ENCODE measurements at regions of chr6 and their contacts with region 1.

Region 1: DNA sequence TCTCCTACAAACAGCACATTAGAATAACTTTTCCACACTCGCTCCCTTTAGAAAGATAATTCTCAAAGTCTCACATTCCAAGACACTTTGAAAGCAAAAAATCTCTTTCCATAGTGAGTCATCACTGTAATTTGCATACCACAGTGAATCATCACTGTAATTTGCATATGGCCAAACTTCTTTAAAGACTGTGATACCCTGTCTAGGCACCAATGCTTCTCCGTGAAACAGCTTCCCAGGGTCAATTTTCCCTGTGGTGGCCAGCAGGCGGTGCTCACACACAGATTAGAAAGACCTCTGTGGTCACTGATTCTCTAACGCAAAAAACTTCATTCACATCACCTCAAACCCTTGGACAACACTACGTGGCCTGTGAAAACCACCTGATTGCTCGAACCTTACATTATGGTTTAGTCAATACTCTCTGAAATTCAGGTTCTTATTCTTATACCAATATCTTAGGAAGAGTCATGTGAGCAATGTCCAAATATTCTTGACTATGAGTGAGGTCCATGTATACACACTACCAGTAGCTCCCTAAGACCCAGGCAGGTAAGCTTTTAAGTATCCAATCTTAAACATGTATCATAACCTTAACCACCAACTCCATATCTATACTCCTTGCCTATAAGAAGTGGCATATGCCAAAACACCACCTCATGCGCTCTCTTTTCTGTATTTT is 78.5 kb upstream of the PHACTR1 start:
- DNase-seq: peak; percentile 71
- H3K4me3 Mint-ChIP-seq: no peak overlapping the region
- H3K27ac Mint-ChIP-seq: no peak overlapping the region
- H3K4me1 Mint-ChIP-seq: peaks cover 4% of the 10 kb centered on the region
- H3K27me3 Mint-ChIP-seq: peaks cover 34% of the 10 kb centered on the region

Region 2: GRCh38 chr6:12844290-12845223 is 206.5 kb after region 1 on chr6:
- CTCF ChIA-PET with region 1: no interaction called
- intact Hi-C with region 1: loop called (anchors 2 kb)
- DNase-seq: no peak
- H3K4me3 Mint-ChIP-seq: no peak overlapping the region
- H3K27ac Mint-ChIP-seq: no peak overlapping the region
- H3K4me1 Mint-ChIP-seq: no peaks in the 10 kb centered on the region
- H3K27me3 Mint-ChIP-seq: peaks cover 7% of the 10 kb centered on the region

Region 3: DNA sequence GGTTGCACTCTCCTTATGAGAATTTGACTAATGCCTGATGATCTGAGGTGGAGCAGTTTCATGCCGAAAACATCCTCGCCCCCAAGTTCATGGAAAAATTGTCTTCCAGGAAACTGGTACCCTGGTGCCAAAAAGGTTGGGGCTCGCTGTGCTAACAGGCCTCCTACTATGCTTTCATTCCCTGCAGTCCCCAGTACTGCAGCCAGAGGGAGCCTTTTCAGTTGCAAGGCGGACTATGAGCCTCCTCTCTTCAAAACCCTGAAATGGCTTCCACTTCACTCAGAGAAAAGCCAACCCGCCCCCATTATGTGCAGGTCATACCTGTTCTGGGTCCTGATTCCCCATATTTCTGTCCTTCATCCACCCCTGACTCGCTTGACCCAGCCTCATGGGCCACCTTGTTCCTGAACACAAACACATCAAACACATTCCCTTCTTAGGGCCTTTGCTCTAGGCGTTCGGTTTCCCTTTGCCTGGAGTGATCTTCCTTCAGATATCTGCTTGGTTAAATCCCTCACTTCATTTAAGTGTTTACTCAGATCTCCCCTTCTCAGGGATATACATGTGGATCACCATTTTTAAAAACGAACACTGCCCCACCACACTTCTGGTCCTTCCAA is 252.2 kb after region 1 on chr6:
- CTCF ChIA-PET with region 1: interaction called, 7 read pairs
- intact Hi-C with region 1: loop called (anchors 1 kb)
- DNase-seq: peak; percentile 31
- H3K4me3 Mint-ChIP-seq: no peak overlapping the region
- H3K27ac Mint-ChIP-seq: no peak overlapping the region
- H3K4me1 Mint-ChIP-seq: no peaks in the 10 kb centered on the region
- H3K27me3 Mint-ChIP-seq: peaks cover 15% of the 10 kb centered on the region

Measured in activated naive CD4-positive, alpha-beta T cell treated with anti-CD3 and anti-CD28 coated beads for 36 hours (primary cell).